ENCODE measurements at regions of chr1 and their contacts with region 1.

Region 1: GRCh38 chr1:9942939-9943788 is at the starts of genes LZIC and NMNAT1:
- DNase-seq: peak; percentile 92
- ATAC-seq: peak; percentile 94
- H3K4me3 Mint-ChIP-seq: peak within 1 kb of the TSS; percentile 98
- H3K27ac Mint-ChIP-seq: peak within 1 kb of the TSS; percentile 98
- H3K4me1 Mint-ChIP-seq: peaks cover 30% of the 10 kb centered on the region
- H3K27me3 Mint-ChIP-seq: no peaks in the 10 kb centered on the region
- CTCF ChIP-seq: no peak
- total RNA-seq, gene LZIC: 19.3 and 20.9 TPM in 2 replicates
- total RNA-seq, gene NMNAT1: 5.8 and 7.5 TPM in 2 replicates

Region 2: DNA sequence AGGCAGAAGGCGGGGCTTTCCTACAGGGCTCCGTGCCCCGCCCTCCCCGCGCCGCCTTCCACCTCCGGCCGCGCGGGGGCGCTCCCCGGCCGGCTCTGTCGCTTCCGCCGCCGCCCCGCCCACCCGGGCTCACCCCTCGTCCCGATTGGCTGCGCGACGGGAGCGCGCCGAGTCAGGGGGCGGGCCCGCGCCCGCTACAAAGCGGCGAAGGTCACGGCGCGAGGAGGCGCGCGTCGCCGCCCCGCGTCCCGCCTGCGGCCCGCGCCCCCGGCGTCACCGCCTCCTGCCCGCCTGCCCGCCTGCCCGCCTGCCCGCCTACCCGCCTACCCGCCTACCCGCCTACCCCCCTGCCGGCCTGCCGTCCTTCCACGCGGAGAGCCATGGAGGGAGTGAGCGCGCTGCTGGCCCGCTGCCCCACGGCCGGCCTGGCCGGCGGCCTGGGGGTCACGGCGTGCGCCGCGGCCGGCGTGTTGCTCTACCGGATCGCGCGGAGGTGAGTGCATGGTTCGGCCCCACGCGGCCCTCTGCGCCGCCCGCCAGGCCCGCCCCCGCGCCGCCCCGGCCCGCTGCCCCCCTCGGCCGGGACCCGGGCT is 354.5 kb before region 1 on chr1 and contains the start of gene TMEM201:
- CTCF ChIA-PET with region 1: no interaction called
- POLR2A ChIA-PET with region 1: no interaction called
- intact Hi-C with region 1: loop called (anchors 1 kb)
- DNase-seq: peak; percentile 98
- ATAC-seq: peak; percentile 91
- H3K4me3 Mint-ChIP-seq: peak within 1 kb of the TSS; percentile 84
- H3K27ac Mint-ChIP-seq: peak within 1 kb of the TSS; percentile 12
- H3K4me1 Mint-ChIP-seq: peaks cover 38% of the 10 kb centered on the region
- H3K27me3 Mint-ChIP-seq: no peaks in the 10 kb centered on the region
- CTCF ChIP-seq: no peak
- total RNA-seq, gene TMEM201: 8.1 and 9.4 TPM in 2 replicates

Region 3: DNA sequence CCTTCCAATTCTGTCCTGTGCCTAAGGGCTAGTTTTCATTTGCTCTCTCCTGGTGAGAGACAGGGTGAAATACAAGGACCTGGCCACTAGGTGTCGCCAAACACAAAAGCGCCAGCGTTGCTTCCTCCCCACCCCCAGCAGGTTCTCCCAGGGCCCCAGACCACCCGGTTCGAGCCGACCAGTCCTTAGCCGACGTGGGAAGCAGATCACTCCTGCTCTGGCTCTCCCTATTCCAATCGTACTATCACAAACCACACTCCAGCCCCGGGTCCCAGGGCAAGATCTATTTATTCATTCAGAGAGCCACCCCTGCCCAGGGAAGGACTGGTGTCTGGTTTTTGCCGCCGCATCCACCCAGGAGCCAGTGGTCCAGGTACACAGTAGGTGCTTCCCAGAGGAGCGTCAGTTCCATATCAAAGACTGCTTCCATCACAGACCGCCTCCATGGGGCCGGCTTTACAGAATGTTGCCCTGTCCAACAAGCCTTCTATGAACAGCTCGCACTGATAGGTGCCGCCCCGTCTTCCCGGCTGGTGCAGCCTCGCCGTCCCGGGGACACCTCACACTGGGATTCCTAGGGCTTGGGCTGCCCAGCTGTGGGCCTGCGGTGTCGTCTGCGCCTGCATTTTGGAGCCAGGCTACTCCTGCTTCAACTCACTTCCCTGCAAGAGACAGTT is 68.1 kb before region 1 on chr1:
- CTCF ChIA-PET with region 1: interaction called, 5 read pairs
- POLR2A ChIA-PET with region 1: no interaction called
- intact Hi-C with region 1: loop called (anchors 1 kb)
- DNase-seq: peak; percentile 59
- ATAC-seq: peak; percentile 97
- H3K4me3 Mint-ChIP-seq: no peak overlapping the region
- H3K27ac Mint-ChIP-seq: peak overlapping the region; percentile 11
- H3K4me1 Mint-ChIP-seq: peaks cover 5% of the 10 kb centered on the region
- H3K27me3 Mint-ChIP-seq: no peaks in the 10 kb centered on the region
- CTCF ChIP-seq: no peak

Region 4: DNA sequence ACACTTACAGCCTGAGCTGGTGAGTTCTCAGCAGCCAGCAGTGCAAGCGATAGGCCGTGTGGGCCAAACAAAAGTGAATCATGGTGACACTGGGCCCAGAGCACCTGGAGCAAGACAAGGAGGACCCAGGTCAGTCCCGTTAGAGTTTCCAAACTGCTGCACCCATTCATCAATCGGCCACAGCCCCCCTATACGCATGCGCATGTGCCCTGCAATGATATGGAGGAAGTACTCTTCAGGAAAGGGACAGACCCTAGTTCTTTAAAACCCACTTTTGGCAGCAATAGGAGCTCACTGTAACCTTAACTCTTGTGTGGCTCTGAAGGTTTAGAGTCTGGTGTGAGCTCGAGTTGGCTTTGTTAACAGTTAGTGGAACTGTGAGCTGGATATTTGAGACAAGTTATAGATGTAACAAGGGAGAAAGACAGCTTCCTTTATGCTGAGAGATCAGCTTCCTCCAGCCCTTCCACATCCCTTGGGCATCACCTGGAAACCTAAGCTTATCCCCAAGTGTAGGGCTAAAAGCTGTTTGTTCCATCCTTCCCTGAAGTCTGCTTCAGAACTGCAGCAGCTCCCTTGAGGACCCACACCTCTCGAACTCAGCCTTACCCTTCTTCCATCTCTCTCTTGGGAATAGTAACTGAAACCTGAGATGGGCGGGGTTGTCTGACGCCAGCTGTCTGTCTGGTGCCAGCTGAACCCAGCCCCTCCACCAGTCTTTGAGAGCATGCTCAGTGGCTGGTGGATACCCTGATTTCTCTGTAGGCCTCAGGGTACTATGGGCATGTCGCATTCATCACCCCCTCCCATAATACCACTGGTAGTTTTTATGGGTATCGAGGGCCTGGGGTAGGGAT is 17.8 kb after region 1 on chr1:
- CTCF ChIA-PET with region 1: interaction called, 3 read pairs
- POLR2A ChIA-PET with region 1: interaction called, 15 read pairs
- intact Hi-C with region 1: no loop called
- DNase-seq: peak; percentile 50
- ATAC-seq: peak; percentile 99
- H3K4me3 Mint-ChIP-seq: peak overlapping the region; percentile 44
- H3K27ac Mint-ChIP-seq: peak overlapping the region; percentile 75
- H3K4me1 Mint-ChIP-seq: peaks cover 15% of the 10 kb centered on the region
- H3K27me3 Mint-ChIP-seq: no peaks in the 10 kb centered on the region
- CTCF ChIP-seq: no peak

Region 5: DNA sequence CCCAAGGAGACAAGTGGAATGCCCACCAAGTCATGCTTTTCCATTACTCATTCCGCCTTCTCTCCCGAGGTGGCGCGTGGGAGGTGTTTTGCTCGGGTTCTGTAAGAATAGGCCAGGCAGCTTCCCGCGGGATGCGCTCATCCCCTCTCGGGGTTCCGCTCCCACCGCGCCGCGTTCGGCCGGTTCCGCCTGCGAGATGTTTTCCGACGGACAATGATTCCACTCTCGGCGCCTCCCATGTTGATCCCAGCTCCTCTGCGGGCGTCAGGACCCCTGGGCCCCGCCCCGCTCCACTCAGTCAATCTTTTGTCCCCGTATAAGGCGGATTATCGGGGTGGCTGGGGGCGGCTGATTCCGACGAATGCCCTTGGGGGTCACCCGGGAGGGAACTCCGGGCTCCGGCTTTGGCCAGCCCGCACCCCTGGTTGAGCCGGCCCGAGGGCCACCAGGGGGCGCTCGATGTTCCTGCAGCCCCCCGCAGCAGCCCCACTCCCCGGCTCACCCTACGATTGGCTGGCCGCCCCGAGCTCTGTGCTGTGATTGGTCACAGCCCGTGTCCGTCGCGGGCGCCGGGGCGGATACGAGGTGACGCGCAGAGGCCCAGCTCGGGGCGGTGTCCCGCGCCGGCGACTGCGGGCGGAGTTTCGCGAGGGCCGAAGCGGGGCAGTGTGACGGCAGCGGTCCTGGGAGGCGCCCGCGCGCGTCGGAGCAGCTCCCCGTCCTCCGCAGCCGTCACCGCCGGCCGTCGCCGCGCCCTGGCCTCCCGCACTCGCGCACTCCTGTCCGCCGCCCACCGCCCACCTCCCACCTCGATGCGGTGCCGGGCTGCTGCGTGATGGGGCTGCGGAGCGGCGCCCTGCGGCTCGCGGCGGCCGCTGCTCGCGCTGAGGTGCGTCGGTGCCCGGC is 267.0 kb after region 1 on chr1 and contains the start of gene KIF1B:
- CTCF ChIA-PET with region 1: no interaction called
- POLR2A ChIA-PET with region 1: no interaction called
- intact Hi-C with region 1: loop called (anchors 1 kb)
- DNase-seq: peak; percentile 98
- ATAC-seq: peak; percentile 97
- H3K4me3 Mint-ChIP-seq: peak within 1 kb of the TSS; percentile 89
- H3K27ac Mint-ChIP-seq: peak within 1 kb of the TSS; percentile 61
- H3K4me1 Mint-ChIP-seq: peaks cover 25% of the 10 kb centered on the region
- H3K27me3 Mint-ChIP-seq: no peaks in the 10 kb centered on the region
- CTCF ChIP-seq: peak; percentile 87
- total RNA-seq, gene KIF1B: 5.9 and 7.2 TPM in 2 replicates